Activated CD4-positive, alpha-beta memory T cell treated with anti-CD3 and anti-CD28 coated beads for 36 hours (primary cell): ENCODE measurements at regions of chr7 and their contacts with region 1.

Region 1: DNA sequence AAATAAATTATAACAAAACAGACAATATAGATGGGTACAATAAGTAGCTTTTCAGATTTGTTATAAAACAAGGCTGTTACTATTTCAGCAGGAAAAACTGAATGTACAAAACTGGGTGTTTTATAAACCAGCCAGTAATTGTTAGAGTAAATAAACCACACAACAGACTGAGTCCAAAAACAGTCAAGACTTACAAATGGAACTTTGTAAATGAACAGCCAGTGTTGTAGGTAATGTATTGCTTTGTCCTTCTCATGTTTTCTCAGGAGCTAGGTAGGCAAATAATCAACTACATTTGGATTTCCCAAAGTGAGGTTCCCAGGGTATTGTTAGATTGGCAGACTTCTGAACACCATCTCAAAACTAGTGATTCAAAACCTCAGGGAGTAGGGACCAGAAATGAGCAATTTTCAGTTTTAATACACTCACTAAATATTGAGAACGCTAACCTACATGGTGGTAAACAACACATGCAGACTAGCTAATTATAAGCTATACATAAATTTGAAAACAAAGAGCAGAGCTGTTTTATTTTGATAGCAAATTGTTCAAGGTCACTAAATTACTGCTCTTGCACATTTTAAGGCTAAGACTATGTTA is 36.2 kb downstream of the HERPUD2 start:
- DNase-seq: no peak
- H3K4me3 Mint-ChIP-seq: no peak overlapping the region
- H3K27ac Mint-ChIP-seq: no peak overlapping the region
- H3K4me1 Mint-ChIP-seq: peaks cover 43% of the 10 kb centered on the region
- H3K27me3 Mint-ChIP-seq: no peaks in the 10 kb centered on the region

Region 2: DNA sequence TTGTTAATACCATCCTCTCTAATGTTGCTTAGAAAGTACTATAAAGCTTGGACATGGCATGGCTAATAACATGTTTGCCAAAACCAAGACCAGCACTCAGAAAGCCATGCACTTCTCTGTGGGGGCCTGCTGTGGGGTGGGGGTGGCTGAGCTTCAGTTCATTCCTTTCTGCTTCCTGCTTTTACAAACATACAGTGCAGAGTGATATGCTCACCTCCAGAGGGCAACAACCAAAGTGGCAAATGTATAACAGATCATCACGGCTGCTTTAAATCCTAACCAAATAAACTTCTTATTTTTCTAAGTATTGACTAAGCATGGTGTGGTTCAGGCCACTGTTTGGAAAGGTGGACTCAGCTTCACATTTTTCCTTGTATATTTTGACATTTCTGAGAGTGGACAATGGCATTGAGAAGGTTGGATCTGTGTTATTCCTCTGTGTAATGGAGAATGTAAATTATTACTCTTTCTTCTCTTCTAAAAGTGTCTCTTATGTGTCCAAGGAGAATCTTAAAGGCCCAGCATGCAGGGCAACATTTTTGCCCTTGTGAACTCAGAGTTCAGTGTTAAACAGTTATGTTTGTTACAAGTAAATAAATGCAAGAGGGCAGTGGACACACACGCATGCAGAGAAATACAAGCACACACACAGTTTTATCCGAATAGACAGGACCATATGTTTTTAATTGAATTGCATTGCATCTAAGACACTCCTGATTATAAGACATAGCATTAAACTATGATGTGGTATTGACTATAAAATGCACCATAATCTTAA is 149.9 kb before region 1 on chr7:
- CTCF ChIA-PET with region 1: no interaction called
- POLR2A ChIA-PET with region 1: no interaction called
- intact Hi-C with region 1: no loop called
- DNase-seq: no peak
- H3K4me3 Mint-ChIP-seq: no peak overlapping the region
- H3K27ac Mint-ChIP-seq: no peak overlapping the region
- H3K4me1 Mint-ChIP-seq: no peaks in the 10 kb centered on the region
- H3K27me3 Mint-ChIP-seq: peaks cover 11% of the 10 kb centered on the region

Region 3: GRCh38 chr7:35681231-35682029 is 22.7 kb after region 1 on chr7:
- CTCF ChIA-PET with region 1: interaction called, 3 read pairs
- POLR2A ChIA-PET with region 1: no interaction called
- intact Hi-C with region 1: loop called (anchors 2 kb)
- DNase-seq: no peak
- H3K4me3 Mint-ChIP-seq: peak overlapping the region; percentile 16
- H3K27ac Mint-ChIP-seq: peak overlapping the region; percentile 70
- H3K4me1 Mint-ChIP-seq: peaks cover 69% of the 10 kb centered on the region
- H3K27me3 Mint-ChIP-seq: no peaks in the 10 kb centered on the region